Activated CD4-positive, alpha-beta T cell treated with anti-CD3 and anti-CD28 coated beads, Interleukin-2, amount 10 ng/mL, durations not matched to agents 24 days and 14 days (primary cell): ENCODE measurements at regions of chr11 and their contacts with region 1.

Region 1: GRCh38 chr11:11022125-11022730 is 164.4 kb upstream of the ZBED5 start:
- DNase-seq: peak; percentile 65
- H3K4me3 Mint-ChIP-seq: no peak overlapping the region
- H3K27ac Mint-ChIP-seq: no peak overlapping the region
- H3K4me1 Mint-ChIP-seq: peaks cover 2% of the 10 kb centered on the region
- H3K27me3 Mint-ChIP-seq: peaks cover 17% of the 10 kb centered on the region

Region 2: GRCh38 chr11:10792398-10792975 is 229.7 kb before region 1 on chr11:
- intact Hi-C with region 1: loop called (anchors 1 kb)
- DNase-seq: peak; percentile 95
- H3K4me3 Mint-ChIP-seq: peak overlapping the region; percentile 1
- H3K27ac Mint-ChIP-seq: no peak overlapping the region
- H3K4me1 Mint-ChIP-seq: peaks cover 11% of the 10 kb centered on the region
- H3K27me3 Mint-ChIP-seq: peaks cover 16% of the 10 kb centered on the region

Region 3: DNA sequence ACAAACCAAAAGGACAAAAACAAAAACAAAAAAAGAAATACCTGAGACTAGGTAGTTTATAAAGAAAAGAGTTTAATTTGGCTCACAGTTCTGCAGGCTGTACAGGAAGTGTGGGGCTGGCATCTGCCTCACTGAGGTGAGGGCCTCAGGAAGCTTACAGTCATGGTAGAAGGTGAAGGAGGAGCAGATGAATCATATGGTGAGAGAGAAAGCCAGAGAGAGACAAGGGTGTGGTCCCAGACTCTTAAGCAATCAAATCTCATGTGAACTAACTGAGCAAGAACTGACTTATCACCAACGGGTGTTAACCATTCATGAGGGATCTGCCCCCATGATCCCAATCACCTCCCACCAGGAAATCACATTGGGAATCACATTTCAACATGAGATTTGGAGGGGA is 105.6 kb before region 1 on chr11:
- intact Hi-C with region 1: no loop called
- DNase-seq: no peak
- H3K4me3 Mint-ChIP-seq: no peak overlapping the region
- H3K27ac Mint-ChIP-seq: no peak overlapping the region
- H3K4me1 Mint-ChIP-seq: no peaks in the 10 kb centered on the region
- H3K27me3 Mint-ChIP-seq: peaks cover 2% of the 10 kb centered on the region

Region 4: DNA sequence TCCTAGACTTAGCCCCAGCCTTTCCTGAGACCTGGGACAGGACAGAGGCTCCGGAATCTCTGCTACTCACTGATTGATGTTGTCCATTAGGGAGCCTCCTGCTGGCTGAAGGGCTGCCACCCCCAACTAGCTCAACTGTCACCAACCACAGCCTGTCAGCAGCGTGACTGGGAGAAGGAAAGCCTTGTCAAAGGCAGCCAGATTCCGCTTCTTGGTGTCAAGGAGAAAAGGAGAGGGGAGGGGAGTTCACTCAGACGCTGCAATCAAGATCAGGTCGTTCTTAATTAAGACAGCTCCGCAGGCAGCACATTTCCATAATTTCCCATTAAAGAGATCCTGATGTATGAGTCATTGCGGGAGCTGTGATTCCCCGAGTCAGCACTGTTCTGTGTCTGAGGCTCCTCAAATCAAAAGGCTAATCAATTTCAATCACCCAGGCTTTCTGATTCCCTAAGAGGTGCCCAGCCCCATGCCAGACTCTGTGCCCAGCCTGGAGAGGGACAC is 11.6 kb before region 1 on chr11:
- intact Hi-C with region 1: no loop called
- DNase-seq: no peak
- H3K4me3 Mint-ChIP-seq: no peak overlapping the region
- H3K27ac Mint-ChIP-seq: no peak overlapping the region
- H3K4me1 Mint-ChIP-seq: no peaks in the 10 kb centered on the region
- H3K27me3 Mint-ChIP-seq: peaks cover 48% of the 10 kb centered on the region

Region 5: GRCh38 chr11:11178671-11179638 is 156.7 kb after region 1 on chr11:
- intact Hi-C with region 1: no loop called
- DNase-seq: no peak
- H3K4me3 Mint-ChIP-seq: no peak overlapping the region
- H3K27ac Mint-ChIP-seq: no peak overlapping the region
- H3K4me1 Mint-ChIP-seq: no peaks in the 10 kb centered on the region
- H3K27me3 Mint-ChIP-seq: peaks cover 16% of the 10 kb centered on the region

Region 6: DNA sequence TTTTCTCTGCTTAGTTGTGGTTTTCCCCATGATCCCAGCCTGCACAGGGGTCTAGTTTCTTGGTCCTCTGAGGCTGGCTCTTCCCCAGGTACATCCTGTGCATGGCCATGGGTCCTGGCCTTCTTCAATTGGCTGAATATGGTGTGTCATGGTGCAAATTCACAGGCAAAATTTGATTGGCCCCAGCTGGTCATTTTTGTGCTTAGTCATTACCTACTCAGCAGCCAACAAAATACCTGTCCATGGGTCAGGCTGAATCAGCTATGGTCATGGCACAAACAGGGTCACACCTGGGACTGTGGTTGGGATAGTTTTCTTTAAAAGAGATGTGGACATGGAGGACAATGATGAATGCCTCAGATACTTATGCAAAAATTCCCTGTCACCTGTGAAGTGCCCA is 245.1 kb after region 1 on chr11:
- intact Hi-C with region 1: no loop called
- DNase-seq: no peak
- H3K4me3 Mint-ChIP-seq: no peak overlapping the region
- H3K27ac Mint-ChIP-seq: no peak overlapping the region
- H3K4me1 Mint-ChIP-seq: no peaks in the 10 kb centered on the region
- H3K27me3 Mint-ChIP-seq: peaks cover 1% of the 10 kb centered on the region